ENCODE measurements at regions of chr3 and their contacts with region 1.

Region 1: DNA sequence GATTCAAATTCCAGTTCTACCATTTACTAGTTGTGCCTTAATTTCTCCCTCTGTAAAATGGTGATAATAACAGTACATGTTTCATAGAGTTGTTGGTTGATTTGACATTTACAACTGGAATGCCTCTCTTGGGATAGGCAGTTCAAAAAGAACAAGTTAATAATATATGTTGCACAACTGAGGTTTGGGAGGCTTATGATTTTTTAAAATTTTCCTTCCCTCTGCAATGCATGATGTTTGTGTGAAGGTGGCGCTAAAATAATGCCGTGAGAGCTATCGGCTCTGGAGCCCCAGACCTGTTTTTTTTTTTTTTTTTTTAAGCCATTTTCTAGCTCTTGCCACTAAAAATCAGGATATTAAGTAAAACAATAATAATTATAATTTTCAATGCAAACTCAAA is 18.6 kb downstream of the DNAJB11 start:
- DNase-seq: peak; percentile 32 to 46 (median 34)
- ATAC-seq: peak; percentile 71
- H3K4me3 ChIP-seq: no peak overlapping the region
- H3K27ac ChIP-seq: no peak overlapping the region
- H3K4me1 ChIP-seq: peaks cover 0 to 26% of the 10 kb centered on the region in 2 experiments; a peak in 3 of 5 replicates
- H3K27me3 ChIP-seq: no peaks in the 10 kb centered on the region
- CTCF ChIP-seq: peak; percentile 52 to 81 (median 63)
- EP300 ChIP-seq: no peak
- POLR2A ChIP-seq: no peak
- RAD21 ChIP-seq: peak; percentile 50 to 59

Region 2: DNA sequence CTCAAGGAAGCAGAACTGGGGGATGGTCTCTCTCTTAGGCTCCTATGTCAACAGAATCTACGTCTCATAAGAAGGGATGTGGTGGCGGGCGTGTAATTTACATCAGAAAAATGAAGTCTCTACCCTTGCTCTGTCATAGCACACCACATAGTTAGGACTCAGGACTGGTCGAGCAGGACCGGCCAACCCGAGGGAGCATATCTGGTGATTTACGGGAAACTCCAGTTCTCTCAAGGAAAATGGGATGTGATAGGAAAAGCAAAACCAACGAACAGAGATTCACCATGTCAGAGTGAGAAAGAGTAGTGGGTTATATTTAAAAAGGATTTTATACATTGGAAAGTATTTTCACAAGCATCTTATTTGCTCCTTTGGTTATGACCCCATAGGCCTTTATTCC is 819.0 kb before region 1 on chr3:
- CTCF ChIA-PET with region 1: no interaction called
- POLR2A ChIA-PET with region 1: no interaction called
- in situ Hi-C with region 1: no loop called
- intact Hi-C with region 1: no loop called
- DNase-seq: no peak
- ATAC-seq: no peak
- H3K4me3 ChIP-seq: no peak overlapping the region
- H3K27ac ChIP-seq: no peak overlapping the region
- H3K4me1 ChIP-seq: peaks cover 7 to 17% of the 10 kb centered on the region in 2 experiments; a peak in 3 of 5 replicates
- H3K27me3 ChIP-seq: no peaks in the 10 kb centered on the region
- CTCF ChIP-seq: no peak
- EP300 ChIP-seq: no peak
- POLR2A ChIP-seq: no peak
- RAD21 ChIP-seq: no peak

Region 3: GRCh38 chr3:186570096-186570940 is 18.8 kb before region 1 on chr3 and contains the start of gene DNAJB11:
- CTCF ChIA-PET with region 1: no interaction called
- POLR2A ChIA-PET with region 1: interaction called, 64 read pairs
- in situ Hi-C with region 1: no loop called
- intact Hi-C with region 1: no loop called
- DNase-seq: peak; percentile 93 to 99 (median 97)
- ATAC-seq: peak; percentile 88
- H3K4me3 ChIP-seq: peak within 1 kb of the TSS; percentile 96
- H3K27ac ChIP-seq: peak within 1 kb of the TSS; percentile 95
- H3K4me1 ChIP-seq: peaks cover 3 to 11% of the 10 kb centered on the region in 2 experiments; a peak in 4 of 5 replicates
- H3K27me3 ChIP-seq: no peaks in the 10 kb centered on the region
- CTCF ChIP-seq: no peak
- EP300 ChIP-seq: peak; percentile 37; the same call in 1 of the 2 replicates
- POLR2A ChIP-seq: peak; percentile 98
- RAD21 ChIP-seq: no peak
- polyA plus RNA-seq, gene DNAJB11: 14.8 to 16.7 TPM

Region 4: DNA sequence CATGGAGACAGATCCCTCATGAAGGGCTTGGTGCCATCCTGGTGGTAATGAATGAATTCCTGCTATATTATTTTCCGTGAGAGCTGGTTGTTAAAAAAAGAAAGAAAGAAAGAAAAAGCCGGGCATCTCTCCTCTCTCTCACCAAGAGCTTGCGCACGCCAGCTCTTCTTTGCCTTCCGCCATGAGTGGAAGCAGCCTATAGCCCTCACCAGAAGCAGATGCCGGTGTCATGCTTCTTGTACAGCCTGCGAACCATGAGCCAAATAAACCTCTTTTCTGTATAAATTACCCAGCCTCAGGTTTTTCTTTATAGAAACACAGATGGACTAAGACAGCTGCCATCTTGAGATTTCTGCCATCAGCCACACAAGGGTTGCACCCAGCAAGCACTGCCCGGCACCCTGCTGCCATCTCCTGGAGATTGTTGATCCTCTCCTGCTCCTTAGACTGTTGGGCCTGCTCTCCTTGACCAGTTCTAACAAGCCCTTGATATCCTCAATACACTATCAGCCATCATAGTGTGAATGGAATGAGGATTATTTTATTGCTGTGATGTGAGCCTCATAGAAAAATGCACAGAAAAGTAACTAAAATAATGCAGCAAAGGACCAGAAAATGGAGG is 20.2 kb after region 1 on chr3:
- CTCF ChIA-PET with region 1: no interaction called
- POLR2A ChIA-PET with region 1: interaction called, 3 read pairs
- in situ Hi-C with region 1: no loop called
- intact Hi-C with region 1: loop called (anchors 1 kb)
- DNase-seq: peak in 2 of 4 experiments; percentile 35 to 43
- ATAC-seq: peak; percentile 94
- H3K4me3 ChIP-seq: no peak overlapping the region
- H3K27ac ChIP-seq: no peak overlapping the region
- H3K4me1 ChIP-seq: peaks cover 0 to 9% of the 10 kb centered on the region in 2 experiments; a peak in 2 of 5 replicates
- H3K27me3 ChIP-seq: peaks cover 0 to 18% of the 10 kb centered on the region in 2 experiments; a peak in 4 of 5 replicates
- CTCF ChIP-seq: peak; percentile 51 to 69 (median 59)
- EP300 ChIP-seq: no peak
- POLR2A ChIP-seq: no peak
- RAD21 ChIP-seq: peak; percentile 63 to 89; a peak in 3 of 4 replicates

Region 5: DNA sequence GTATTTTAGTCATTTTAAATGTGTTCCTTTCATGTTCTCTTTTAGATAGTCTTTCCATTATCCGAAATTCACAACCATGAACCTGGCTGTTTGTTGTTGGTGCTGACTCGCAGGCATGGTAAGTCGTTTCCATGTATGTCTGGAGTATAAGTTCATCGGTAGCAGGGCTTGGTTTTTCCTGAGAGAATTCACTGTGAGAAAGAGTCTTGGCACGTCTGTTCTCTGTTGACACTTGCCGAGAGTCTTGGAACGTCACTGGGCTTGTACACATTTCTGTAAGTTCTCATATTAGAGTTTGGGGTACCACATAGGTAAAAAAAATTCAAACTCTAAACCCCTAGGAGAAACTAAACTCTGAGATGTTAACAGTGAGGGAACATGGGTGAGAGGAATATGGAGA is 164.9 kb after region 1 on chr3:
- CTCF ChIA-PET with region 1: interaction called, 3 read pairs
- POLR2A ChIA-PET with region 1: no interaction called
- in situ Hi-C with region 1: no loop called
- intact Hi-C with region 1: loop called (anchors 1 kb)
- DNase-seq: no peak
- ATAC-seq: no peak
- H3K4me3 ChIP-seq: no peak overlapping the region
- H3K27ac ChIP-seq: no peak overlapping the region
- H3K4me1 ChIP-seq: peaks cover 0 to 5% of the 10 kb centered on the region in 2 experiments; a peak in 2 of 5 replicates
- H3K27me3 ChIP-seq: no peaks in the 10 kb centered on the region
- CTCF ChIP-seq: no peak
- EP300 ChIP-seq: no peak
- POLR2A ChIP-seq: no peak
- RAD21 ChIP-seq: no peak

Region 6: GRCh38 chr3:186826976-186827731 is 238.0 kb after region 1 on chr3:
- CTCF ChIA-PET with region 1: interaction called, 4 read pairs
- POLR2A ChIA-PET with region 1: interaction called, 3 read pairs
- in situ Hi-C with region 1: no loop called
- intact Hi-C with region 1: loop called (anchors 10 kb)
- DNase-seq: peak; percentile 92 to 99 (median 99)
- ATAC-seq: peak; percentile 88
- H3K4me3 ChIP-seq: peak overlapping the region; percentile 71
- H3K27ac ChIP-seq: peak overlapping the region; percentile 76
- H3K4me1 ChIP-seq: peaks cover 19 to 37% of the 10 kb centered on the region in 2 experiments; a peak in 4 of 5 replicates
- H3K27me3 ChIP-seq: peaks cover 23 to 24% of the 10 kb centered on the region in 2 experiments; a peak in 4 of 5 replicates
- CTCF ChIP-seq: no peak
- EP300 ChIP-seq: no peak
- POLR2A ChIP-seq: peak; percentile 79
- RAD21 ChIP-seq: no peak